ENCODE measurements at regions of chr9 and their contacts with region 1.

Region 1: DNA sequence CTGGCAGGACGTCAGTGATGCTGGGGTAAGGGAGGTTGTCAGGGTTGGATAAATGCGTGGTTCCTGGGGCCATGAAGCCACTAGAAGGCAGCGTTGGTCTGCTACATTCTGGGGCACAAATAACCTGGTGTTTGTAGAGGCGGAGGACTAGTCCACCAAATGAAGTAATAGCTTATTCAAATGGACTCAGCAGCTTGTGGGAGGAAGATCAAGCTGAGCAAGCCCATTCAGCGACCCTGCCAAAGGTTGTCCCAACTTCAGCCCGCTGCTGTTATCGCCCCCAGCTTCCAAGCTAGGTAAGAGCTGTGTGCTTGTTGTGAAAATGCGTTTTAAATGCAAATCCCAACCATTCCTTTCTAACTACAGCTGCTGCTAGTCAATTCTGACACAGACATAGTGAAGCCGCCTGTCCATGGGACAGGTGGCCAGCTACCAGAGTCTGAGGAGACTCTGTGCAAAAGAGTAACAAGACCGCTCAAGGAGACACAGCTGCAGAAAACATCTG is 7.6 kb upstream of the FAM240B start:
- DNase-seq: peak; percentile 65
- ATAC-seq: peak; percentile 88
- H3K4me3 ChIP-seq: no peak overlapping the region
- H3K27ac ChIP-seq: no peak overlapping the region
- H3K4me1 ChIP-seq: no peaks in the 10 kb centered on the region
- H3K27me3 ChIP-seq: no peaks in the 10 kb centered on the region
- CTCF ChIP-seq: peak; percentile 68

Region 2: DNA sequence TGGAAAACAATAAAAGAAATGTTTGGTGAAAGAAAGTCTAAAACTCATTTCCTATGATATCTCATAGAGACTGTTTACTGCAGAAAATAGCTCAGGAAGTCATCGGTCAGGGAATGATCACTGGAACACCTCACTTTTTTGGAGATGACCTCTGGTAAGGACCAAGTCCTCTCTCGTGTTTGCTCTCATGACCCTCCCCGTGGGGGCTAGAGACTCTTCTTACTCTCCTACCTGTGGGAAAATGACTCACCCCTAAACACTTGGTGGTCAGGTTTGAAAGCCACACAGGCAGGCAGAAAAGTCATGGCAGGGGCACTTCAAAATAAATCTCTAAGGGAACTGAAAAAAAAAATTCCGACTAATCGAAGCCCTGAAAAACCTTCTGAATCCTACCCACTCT is 55.8 kb before region 1 on chr9:
- CTCF ChIA-PET with region 1: interaction called, 10 read pairs
- POLR2A ChIA-PET with region 1: no interaction called
- intact Hi-C with region 1: no loop called
- DNase-seq: no peak
- ATAC-seq: no peak
- H3K4me3 ChIP-seq: peak overlapping the region; percentile 39; the same call in 1 of the 2 replicates
- H3K27ac ChIP-seq: no peak overlapping the region
- H3K4me1 ChIP-seq: peaks cover 8% of the 10 kb centered on the region
- H3K27me3 ChIP-seq: no peaks in the 10 kb centered on the region
- CTCF ChIP-seq: no peak